Activated CD8-positive, alpha-beta memory T cell treated with anti-CD3 and anti-CD28 coated beads, Interleukin-2, amount 10 ng/mL, durations not matched to agents 7 days and 5 days (primary cell): ENCODE measurements at regions of chr5 and their contacts with region 1.

Region 1: DNA sequence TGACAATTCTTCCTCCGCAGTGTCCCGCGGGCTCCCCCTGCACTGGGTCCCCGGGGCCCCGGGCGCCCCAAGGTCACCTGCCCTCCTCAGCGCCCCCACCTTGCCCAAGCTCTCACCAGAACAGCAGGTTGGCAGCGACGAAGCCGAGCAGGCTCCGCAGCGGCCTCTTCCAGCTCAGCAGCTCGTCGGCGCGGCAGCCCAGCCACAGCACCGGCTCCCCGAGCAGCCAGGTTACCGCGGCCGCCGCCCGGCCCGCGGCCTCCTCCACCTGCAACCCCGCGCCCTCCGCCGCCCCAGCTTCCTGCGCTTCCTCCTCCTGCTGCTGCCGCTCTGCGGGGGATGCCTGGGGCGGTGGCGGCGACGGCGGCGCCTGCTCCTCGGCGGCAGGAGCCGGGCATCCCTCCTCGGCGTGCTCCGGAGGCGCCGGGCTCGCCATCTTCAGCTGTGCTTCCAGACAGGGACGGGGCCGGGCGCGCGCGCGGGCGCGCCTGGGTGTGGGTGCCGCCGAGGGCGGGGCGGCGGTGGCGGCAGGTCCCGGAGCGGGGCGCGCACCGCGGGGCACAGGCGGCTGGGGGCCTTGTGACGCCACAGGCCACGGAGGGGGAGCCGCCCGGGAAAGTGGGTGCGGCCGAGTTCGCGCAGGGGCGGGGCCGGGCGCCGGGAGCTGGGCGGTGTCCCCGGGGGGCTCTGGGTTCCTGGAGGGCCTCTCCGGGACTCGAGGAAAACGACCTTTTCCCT is at the start of gene RETREG1:
- DNase-seq: peak; percentile 85
- ATAC-seq: peak; percentile 90
- H3K4me3 Mint-ChIP-seq: peak within 1 kb of the TSS; percentile 93
- H3K27ac Mint-ChIP-seq: peak within 1 kb of the TSS; percentile 84
- H3K4me1 Mint-ChIP-seq: peaks cover 35% of the 10 kb centered on the region
- H3K27me3 Mint-ChIP-seq: no peaks in the 10 kb centered on the region
- total RNA-seq, gene RETREG1: 18.1 to 30.3 TPM

Region 2: GRCh38 chr5:16626663-16627264 is 10.1 kb after region 1 on chr5:
- CTCF ChIA-PET with region 1: interaction called, 23 read pairs
- DNase-seq: peak; percentile 71
- ATAC-seq: peak; percentile 82
- H3K4me3 Mint-ChIP-seq: no peak overlapping the region
- H3K27ac Mint-ChIP-seq: peak overlapping the region; percentile 85
- H3K4me1 Mint-ChIP-seq: peaks cover 29% of the 10 kb centered on the region
- H3K27me3 Mint-ChIP-seq: no peaks in the 10 kb centered on the region